ENCODE measurements at regions of chr6 and their contacts with region 1.

Region 1: GRCh38 chr6:127775371-127775770 is 125.5 kb downstream of the THEMIS start:
- DNase-seq: no peak
- H3K4me3 Mint-ChIP-seq: no peak overlapping the region
- H3K27ac Mint-ChIP-seq: no peak overlapping the region
- H3K4me1 Mint-ChIP-seq: peaks cover 44% of the 10 kb centered on the region
- H3K27me3 Mint-ChIP-seq: no peaks in the 10 kb centered on the region

Region 2: DNA sequence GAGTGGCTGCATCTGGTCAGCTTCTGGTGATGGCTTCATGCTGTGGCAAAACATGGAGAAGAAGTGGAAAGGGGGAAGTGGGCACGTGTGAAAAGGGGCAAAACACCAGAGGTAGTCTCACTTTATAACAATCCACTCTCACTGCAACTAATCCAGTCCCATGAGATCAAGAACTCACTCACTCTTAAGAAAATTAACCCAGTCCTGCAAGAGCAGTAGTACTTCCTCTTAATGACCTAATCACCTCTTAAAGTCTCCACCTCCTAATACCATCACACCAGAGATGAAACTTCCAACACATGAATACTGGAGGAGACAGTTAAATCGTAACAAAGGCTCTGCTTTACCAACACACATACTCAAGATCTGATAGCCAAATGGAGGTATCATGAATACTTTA is 27.1 kb before region 1 on chr6:
- CTCF ChIA-PET with region 1: no interaction called
- POLR2A ChIA-PET with region 1: no interaction called
- intact Hi-C with region 1: loop called (anchors 2 kb)
- DNase-seq: no peak
- H3K4me3 Mint-ChIP-seq: peak overlapping the region; percentile 44
- H3K27ac Mint-ChIP-seq: peak overlapping the region; percentile 74
- H3K4me1 Mint-ChIP-seq: peaks cover 58% of the 10 kb centered on the region
- H3K27me3 Mint-ChIP-seq: no peaks in the 10 kb centered on the region

Region 3: DNA sequence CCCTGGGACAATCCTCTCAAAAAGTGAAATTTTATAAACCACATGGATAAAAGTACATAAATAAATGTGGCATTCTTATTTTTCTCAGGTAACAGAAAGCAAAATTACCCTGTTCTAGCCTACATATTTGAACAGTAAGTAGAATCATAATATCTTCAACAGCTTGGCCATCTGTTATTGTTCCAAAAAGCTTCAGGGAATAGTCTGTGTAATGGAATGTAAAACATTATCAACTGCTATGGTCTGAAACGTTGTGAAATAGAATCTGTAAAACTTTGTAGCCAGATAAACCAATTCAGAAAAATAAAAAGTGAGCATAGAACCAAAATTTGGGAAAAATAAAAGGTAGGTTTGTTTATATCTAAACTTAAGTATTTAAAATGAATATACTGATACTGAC is 10.7 kb after region 1 on chr6:
- CTCF ChIA-PET with region 1: interaction called, 3 read pairs
- POLR2A ChIA-PET with region 1: interaction called, 3 read pairs
- intact Hi-C with region 1: loop called (anchors 1 kb)
- DNase-seq: no peak
- H3K4me3 Mint-ChIP-seq: no peak overlapping the region
- H3K27ac Mint-ChIP-seq: no peak overlapping the region
- H3K4me1 Mint-ChIP-seq: peaks cover 61% of the 10 kb centered on the region
- H3K27me3 Mint-ChIP-seq: no peaks in the 10 kb centered on the region

Region 4: GRCh38 chr6:127811900-127812570 is 36.7 kb after region 1 on chr6:
- CTCF ChIA-PET with region 1: no interaction called
- POLR2A ChIA-PET with region 1: no interaction called
- intact Hi-C with region 1: loop called (anchors 1 kb)
- DNase-seq: peak; percentile 30
- H3K4me3 Mint-ChIP-seq: peak overlapping the region; percentile 20
- H3K27ac Mint-ChIP-seq: no peak overlapping the region
- H3K4me1 Mint-ChIP-seq: peaks cover 87% of the 10 kb centered on the region
- H3K27me3 Mint-ChIP-seq: no peaks in the 10 kb centered on the region

Region 5: GRCh38 chr6:127992144-127992543 is 216.8 kb after region 1 on chr6:
- CTCF ChIA-PET with region 1: no interaction called
- POLR2A ChIA-PET with region 1: no interaction called
- intact Hi-C with region 1: no loop called
- DNase-seq: no peak
- H3K4me3 Mint-ChIP-seq: no peak overlapping the region
- H3K27ac Mint-ChIP-seq: no peak overlapping the region
- H3K4me1 Mint-ChIP-seq: peaks cover 5% of the 10 kb centered on the region
- H3K27me3 Mint-ChIP-seq: no peaks in the 10 kb centered on the region

Measured in activated CD4-positive, alpha-beta memory T cell treated with anti-CD3 and anti-CD28 coated beads for 36 hours (primary cell).